ENCODE measurements at regions of chr16 and their contacts with region 1.

Region 1: GRCh38 chr16:66947302-66948065 is 12.2 kb downstream of the CES2 start:
- DNase-seq: peak; percentile 86
- H3K4me3 Mint-ChIP-seq: peak overlapping the region; percentile 77
- H3K27ac Mint-ChIP-seq: peak overlapping the region; percentile 32
- H3K4me1 Mint-ChIP-seq: peaks cover 20% of the 10 kb centered on the region
- H3K27me3 Mint-ChIP-seq: peaks cover 29% of the 10 kb centered on the region
- CTCF ChIP-seq: peak; percentile 89

Region 2: GRCh38 chr16:66894948-66895688 is 52.4 kb before region 1 on chr16:
- CTCF ChIA-PET with region 1: no interaction called
- intact Hi-C with region 1: loop called (anchors 5 kb)
- DNase-seq: peak; percentile 77
- H3K4me3 Mint-ChIP-seq: no peak overlapping the region
- H3K27ac Mint-ChIP-seq: no peak overlapping the region
- H3K4me1 Mint-ChIP-seq: peaks cover 33% of the 10 kb centered on the region
- H3K27me3 Mint-ChIP-seq: no peaks in the 10 kb centered on the region
- CTCF ChIP-seq: peak; percentile 94

Region 3: GRCh38 chr16:67183627-67184328 is 236.3 kb after region 1 on chr16 and contains the start of gene MATCAP1:
- CTCF ChIA-PET with region 1: no interaction called
- intact Hi-C with region 1: loop called (anchors 5 kb)
- DNase-seq: peak; percentile 97
- H3K4me3 Mint-ChIP-seq: no peak within 1 kb of the TSS
- H3K27ac Mint-ChIP-seq: no peak within 1 kb of the TSS
- H3K4me1 Mint-ChIP-seq: peaks cover 15% of the 10 kb centered on the region
- H3K27me3 Mint-ChIP-seq: peaks cover 12% of the 10 kb centered on the region
- CTCF ChIP-seq: no peak
- total RNA-seq, gene MATCAP1: 33.1 and 36.5 TPM in 2 replicates

Region 4: DNA sequence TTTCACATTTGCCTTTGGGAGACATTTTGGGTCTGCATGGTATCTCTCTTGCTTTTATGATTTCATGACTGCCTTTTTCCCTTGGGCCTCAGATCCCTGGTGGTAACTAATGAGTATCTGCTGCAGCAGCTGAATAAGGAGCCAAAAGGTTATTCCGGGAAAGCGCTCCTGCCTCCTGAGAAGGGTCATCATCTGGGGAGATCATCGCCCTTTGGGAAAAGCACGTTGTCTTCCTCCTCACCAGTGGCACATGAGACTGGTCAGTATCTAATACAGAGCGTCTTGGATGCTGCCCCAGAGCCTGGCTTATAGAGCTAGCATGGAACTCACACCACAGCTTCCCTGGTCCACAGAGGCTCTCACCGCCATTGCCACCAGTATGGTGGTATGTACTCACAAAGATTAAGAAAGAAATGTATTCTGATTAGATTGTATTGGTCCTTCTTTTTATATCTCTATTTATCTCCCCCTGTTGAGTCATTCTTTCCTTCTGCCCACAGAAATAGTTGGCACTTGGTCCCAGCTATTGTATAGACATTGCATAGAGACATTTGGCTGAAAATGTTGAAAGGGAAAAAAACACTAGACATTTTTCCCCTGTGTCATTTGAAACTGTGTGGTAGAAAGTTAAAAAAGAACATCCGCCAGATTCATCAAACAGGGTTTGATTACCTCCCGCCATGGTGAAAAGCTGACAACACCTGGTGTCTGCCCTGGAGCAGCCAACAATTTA is 437.5 kb after region 1 on chr16:
- CTCF ChIA-PET with region 1: no interaction called
- intact Hi-C with region 1: no loop called
- DNase-seq: no peak
- H3K4me3 Mint-ChIP-seq: no peak overlapping the region
- H3K27ac Mint-ChIP-seq: no peak overlapping the region
- H3K4me1 Mint-ChIP-seq: no peaks in the 10 kb centered on the region
- H3K27me3 Mint-ChIP-seq: no peaks in the 10 kb centered on the region
- CTCF ChIP-seq: no peak